ENCODE measurements at regions of chr13 and their contacts with region 1.

Region 1: GRCh38 chr13:42110410-42111155 is 62.1 kb downstream of the DGKH start:
- DNase-seq: no peak
- H3K4me3 Mint-ChIP-seq: no peak overlapping the region
- H3K27ac Mint-ChIP-seq: no peak overlapping the region
- H3K4me1 Mint-ChIP-seq: peaks cover 6% of the 10 kb centered on the region
- H3K27me3 Mint-ChIP-seq: no peaks in the 10 kb centered on the region

Region 2: DNA sequence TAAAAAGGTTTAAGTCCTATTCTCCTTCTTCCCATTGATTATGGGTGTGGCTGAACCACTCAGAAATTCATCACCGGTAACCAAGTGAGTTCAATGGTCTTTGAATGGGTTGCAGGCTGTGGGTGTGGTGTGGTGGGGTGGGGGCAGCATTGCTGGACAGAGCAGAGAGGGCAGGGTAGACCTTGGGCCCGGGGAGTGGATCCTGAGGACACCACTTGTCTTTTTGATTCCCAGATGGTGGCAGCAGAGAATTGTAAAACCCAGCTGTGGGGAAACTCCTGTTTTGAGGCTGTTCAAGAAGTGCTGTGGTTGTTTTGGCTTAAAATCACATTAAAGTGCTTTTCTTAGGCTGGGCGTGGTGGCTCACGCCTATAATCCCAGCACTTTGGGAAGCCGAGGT is 699.1 kb before region 1 on chr13:
- CTCF ChIA-PET with region 1: no interaction called
- POLR2A ChIA-PET with region 1: no interaction called
- intact Hi-C with region 1: loop called (anchors 2 kb)
- DNase-seq: peak; percentile 36
- H3K4me3 Mint-ChIP-seq: no peak overlapping the region
- H3K27ac Mint-ChIP-seq: no peak overlapping the region
- H3K4me1 Mint-ChIP-seq: no peaks in the 10 kb centered on the region
- H3K27me3 Mint-ChIP-seq: no peaks in the 10 kb centered on the region

Region 3: DNA sequence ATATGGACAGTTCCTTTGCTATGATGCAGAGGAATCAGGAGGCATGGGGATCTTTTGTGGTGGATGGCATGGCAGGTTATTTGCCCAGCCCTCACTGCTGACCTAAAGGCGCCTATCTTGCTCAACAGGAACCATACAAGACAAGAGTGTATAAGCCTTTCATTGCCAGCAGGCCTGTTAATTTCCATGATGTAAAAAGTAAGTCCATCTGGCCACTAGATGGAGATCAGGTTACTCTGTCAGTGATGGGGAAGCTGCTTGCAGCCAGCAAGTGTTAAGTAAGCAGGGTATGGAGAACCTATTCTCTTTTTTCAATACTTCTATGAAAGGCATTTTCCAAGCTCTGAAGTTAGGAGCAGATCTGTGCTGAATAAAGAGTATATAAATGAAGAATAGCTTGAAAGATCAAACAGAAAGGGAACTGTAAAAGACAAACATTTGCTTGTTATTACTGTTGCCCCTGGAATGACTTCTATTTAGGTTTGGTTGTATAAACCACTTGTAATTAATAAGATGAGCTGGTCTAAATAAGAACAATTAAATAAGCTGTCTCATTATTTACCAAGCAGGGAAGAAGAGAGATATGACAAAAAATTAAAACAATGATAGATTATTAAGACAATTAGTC is 442.3 kb before region 1 on chr13:
- CTCF ChIA-PET with region 1: interaction called, 25 read pairs
- POLR2A ChIA-PET with region 1: no interaction called
- intact Hi-C with region 1: loop called (anchors 1 kb)
- DNase-seq: peak; percentile 30
- H3K4me3 Mint-ChIP-seq: no peak overlapping the region
- H3K27ac Mint-ChIP-seq: no peak overlapping the region
- H3K4me1 Mint-ChIP-seq: no peaks in the 10 kb centered on the region
- H3K27me3 Mint-ChIP-seq: no peaks in the 10 kb centered on the region

Region 4: DNA sequence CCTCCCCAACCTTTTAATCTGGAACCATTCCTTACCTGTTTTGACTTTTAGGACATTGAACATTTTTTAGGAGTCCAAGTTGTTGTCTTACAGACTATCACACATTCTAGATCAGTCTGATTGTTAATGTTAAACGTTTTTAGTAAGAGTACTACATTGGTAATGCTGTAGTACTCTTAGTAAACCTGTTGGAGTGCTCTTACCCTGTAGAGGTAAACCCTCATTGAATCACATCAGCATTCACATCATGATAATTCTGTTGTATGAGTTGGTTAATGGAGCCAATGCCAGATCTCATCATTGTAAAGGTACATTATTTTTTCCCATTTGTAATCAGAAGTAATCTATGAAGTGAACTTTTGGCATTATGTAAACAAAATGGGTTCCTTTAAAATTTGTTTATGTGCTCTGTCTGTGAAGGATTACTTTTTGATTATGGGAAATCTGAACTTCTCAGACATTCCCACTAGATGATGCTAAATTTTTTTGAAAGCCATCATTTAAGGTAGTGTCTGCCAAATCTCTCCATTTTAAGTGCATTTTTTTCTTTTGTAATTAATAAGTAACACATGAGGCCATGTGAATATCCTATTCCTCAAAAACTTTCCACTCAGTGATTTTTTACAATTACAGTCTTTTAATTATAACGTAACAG is 204.9 kb before region 1 on chr13:
- CTCF ChIA-PET with region 1: interaction called, 21 read pairs
- POLR2A ChIA-PET with region 1: no interaction called
- intact Hi-C with region 1: loop called (anchors 1 kb)
- DNase-seq: no peak
- H3K4me3 Mint-ChIP-seq: no peak overlapping the region
- H3K27ac Mint-ChIP-seq: no peak overlapping the region
- H3K4me1 Mint-ChIP-seq: peaks cover 9% of the 10 kb centered on the region
- H3K27me3 Mint-ChIP-seq: no peaks in the 10 kb centered on the region

Measured in activated CD4-positive, alpha-beta memory T cell treated with anti-CD3 and anti-CD28 coated beads for 36 hours (primary cell).